ENCODE measurements at regions of chr2 and their contacts with region 1.

Region 1: DNA sequence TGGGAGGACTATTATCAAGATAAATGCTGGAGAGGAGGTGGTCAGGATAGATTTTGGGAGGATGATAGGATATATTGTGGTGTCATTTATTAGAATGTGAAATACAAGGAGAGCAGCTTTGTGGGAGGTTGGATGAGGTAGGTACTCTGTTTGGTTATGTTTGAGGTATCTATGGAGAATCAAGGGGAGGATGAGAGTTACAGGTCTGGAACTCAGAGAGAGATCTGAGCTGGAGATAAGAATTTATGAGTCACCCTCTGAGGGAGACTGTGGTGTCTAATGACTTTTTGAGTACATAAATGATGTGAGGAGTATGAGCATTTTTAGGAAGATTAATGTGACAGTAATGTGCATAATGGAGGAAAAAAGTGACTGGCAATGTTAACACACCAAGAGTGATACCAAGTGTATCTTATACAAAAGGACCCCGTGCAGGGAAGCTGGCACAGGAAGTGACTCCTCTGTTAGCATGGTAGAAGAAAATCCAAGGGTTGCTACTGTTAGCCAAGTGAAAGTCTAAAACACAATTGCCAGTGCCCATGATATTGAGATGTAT is 48.2 kb downstream of the CRIM1 start:
- DNase-seq: peak; percentile 92
- H3K4me3 ChIP-seq: peak overlapping the region in 2 of 3 experiments; percentile 31 to 39
- H3K27ac ChIP-seq: peak overlapping the region; percentile 99
- H3K4me1 ChIP-seq: peaks cover 41% of the 10 kb centered on the region
- H3K27me3 ChIP-seq: no peaks in the 10 kb centered on the region
- CTCF ChIP-seq: no peak

Region 2: GRCh38 chr2:36362291-36362690 is 41.5 kb before region 1 on chr2:
- CTCF ChIA-PET with region 1: no interaction called
- dilution Hi-C with region 1: no loop called
- in situ Hi-C with region 1: no loop called
- intact Hi-C with region 1: loop called (anchors 2 kb)
- DNase-seq: peak; percentile 83
- H3K4me3 ChIP-seq: no peak overlapping the region
- H3K27ac ChIP-seq: peak overlapping the region; percentile 80
- H3K4me1 ChIP-seq: peaks cover 71% of the 10 kb centered on the region
- H3K27me3 ChIP-seq: no peaks in the 10 kb centered on the region
- CTCF ChIP-seq: no peak

Region 3: GRCh38 chr2:36376319-36376765 is 27.4 kb before region 1 on chr2:
- CTCF ChIA-PET with region 1: interaction called, 5 read pairs
- dilution Hi-C with region 1: no loop called
- in situ Hi-C with region 1: no loop called
- intact Hi-C with region 1: loop called (anchors 2 kb)
- DNase-seq: no peak
- H3K4me3 ChIP-seq: no peak overlapping the region
- H3K27ac ChIP-seq: peak overlapping the region; percentile 9
- H3K4me1 ChIP-seq: peaks cover 95% of the 10 kb centered on the region
- H3K27me3 ChIP-seq: no peaks in the 10 kb centered on the region
- CTCF ChIP-seq: no peak

Region 4: DNA sequence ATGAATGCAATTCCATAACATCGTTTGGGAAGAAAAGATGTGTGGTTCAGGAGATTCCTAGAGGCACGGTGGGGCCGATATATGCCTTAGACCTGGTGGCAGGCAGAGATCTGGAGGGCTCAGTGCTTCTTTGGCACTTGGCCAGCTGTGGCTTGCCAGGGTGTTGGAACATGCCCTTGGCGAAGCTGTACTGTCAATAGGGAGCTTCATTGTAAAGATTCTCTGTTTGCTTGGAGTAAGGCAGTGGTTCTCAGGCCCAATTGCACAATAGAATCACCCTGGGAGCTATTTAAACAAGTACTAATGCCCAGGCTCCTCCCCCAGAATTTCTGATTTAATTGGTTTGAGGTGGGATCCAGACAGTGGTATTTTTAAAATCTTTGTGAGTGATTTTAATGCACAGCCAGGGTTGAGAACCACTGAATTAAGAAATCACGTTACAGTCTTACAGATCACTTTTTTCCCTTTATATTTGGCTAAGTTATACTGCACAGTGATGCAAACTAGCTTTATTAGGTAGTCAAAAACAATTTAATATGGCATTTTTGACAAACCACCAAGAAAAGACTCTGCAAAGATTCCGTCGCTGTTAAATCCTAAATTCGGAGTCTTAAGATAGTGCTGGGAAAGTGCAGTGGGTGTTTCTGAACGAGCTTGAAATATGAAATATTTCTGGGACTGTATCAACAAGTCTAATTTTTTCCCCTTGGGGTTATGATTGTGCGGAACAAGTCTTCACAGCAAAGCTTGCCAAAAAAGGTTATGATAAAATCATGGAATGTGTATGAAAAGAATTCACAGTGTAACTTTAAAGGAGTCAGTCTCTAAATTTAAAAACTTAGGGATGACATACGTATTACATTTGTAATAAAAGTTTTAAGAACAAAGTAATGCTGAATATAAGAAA is 29.8 kb after region 1 on chr2:
- CTCF ChIA-PET with region 1: no interaction called
- dilution Hi-C with region 1: no loop called
- in situ Hi-C with region 1: loop called in 1 of 2 experiments (anchors 5 kb)
- intact Hi-C with region 1: loop called (anchors 2 kb)
- DNase-seq: peak; percentile 88
- H3K4me3 ChIP-seq: peak overlapping the region in 2 of 3 experiments; percentile 32 to 33
- H3K27ac ChIP-seq: peak overlapping the region; percentile 81
- H3K4me1 ChIP-seq: peaks cover 32% of the 10 kb centered on the region
- H3K27me3 ChIP-seq: no peaks in the 10 kb centered on the region
- CTCF ChIP-seq: no peak

Region 5: GRCh38 chr2:36507408-36507812 is 103.7 kb after region 1 on chr2:
- CTCF ChIA-PET with region 1: no interaction called
- dilution Hi-C with region 1: no loop called
- in situ Hi-C with region 1: no loop called
- intact Hi-C with region 1: loop called (anchors 5 kb)
- DNase-seq: peak; percentile 35
- H3K4me3 ChIP-seq: no peak overlapping the region
- H3K27ac ChIP-seq: no peak overlapping the region
- H3K4me1 ChIP-seq: no peaks in the 10 kb centered on the region
- H3K27me3 ChIP-seq: no peaks in the 10 kb centered on the region
- CTCF ChIP-seq: peak; percentile 86 to 89

Region 6: GRCh38 chr2:36544638-36545338 is 141.0 kb after region 1 on chr2:
- CTCF ChIA-PET with region 1: no interaction called
- dilution Hi-C with region 1: no loop called
- in situ Hi-C with region 1: no loop called
- intact Hi-C with region 1: no loop called
- DNase-seq: no peak
- H3K4me3 ChIP-seq: no peak overlapping the region
- H3K27ac ChIP-seq: no peak overlapping the region
- H3K4me1 ChIP-seq: no peaks in the 10 kb centered on the region
- H3K27me3 ChIP-seq: no peaks in the 10 kb centered on the region
- CTCF ChIP-seq: peak; percentile 21 to 35